ENCODE measurements at regions of chr4 and their contacts with region 1.

Region 1: DNA sequence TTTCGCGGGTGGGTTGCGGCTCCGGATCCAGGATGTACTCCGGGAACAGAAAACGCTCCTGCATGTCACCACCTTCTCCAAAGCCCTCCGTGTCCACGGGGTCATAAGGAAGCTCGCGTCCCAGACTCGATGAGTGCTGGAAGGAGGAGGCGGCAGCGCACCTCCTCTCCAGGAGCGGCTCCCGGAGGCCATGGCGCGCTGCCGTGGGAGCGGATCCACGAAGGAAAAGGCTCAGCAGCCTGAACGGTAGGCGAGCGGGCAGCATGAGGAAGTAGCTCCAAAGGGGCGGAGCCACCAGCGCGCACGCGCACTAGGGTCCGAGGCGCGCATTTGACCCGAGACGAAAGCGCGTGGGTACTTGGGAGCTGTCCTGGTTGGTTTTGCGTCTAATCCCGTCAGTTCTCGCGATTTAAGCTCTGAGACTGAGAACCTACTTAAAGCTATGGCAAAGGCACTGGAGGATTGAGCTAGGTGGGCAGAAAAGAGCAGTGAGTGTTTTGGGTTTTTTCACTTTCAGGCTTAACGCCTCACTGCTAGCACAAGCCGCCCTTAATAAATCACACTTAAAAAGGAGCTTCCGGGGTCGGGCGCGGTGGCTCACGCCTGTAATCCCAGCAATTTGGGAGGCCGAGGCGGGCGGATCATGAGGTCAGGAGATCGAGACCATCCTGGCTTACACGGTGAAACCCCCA is at the start of gene NOA1:
- DNase-seq: peak; percentile 81 to 98
- ATAC-seq: peak; percentile 87 to 88
- H3K4me3 ChIP-seq: peak within 1 kb of the TSS; percentile 87
- H3K27ac ChIP-seq: peak within 1 kb of the TSS; percentile 85 to 91
- H3K4me1 ChIP-seq: peaks cover 24% of the 10 kb centered on the region
- CTCF ChIP-seq: no peak
- EP300 ChIP-seq: no peak
- POLR2A ChIP-seq: peak; percentile 82
- RAD21 ChIP-seq: no peak
- polyA plus RNA-seq, gene NOA1: 13.8 and 15.0 TPM in 2 replicates

Region 2: DNA sequence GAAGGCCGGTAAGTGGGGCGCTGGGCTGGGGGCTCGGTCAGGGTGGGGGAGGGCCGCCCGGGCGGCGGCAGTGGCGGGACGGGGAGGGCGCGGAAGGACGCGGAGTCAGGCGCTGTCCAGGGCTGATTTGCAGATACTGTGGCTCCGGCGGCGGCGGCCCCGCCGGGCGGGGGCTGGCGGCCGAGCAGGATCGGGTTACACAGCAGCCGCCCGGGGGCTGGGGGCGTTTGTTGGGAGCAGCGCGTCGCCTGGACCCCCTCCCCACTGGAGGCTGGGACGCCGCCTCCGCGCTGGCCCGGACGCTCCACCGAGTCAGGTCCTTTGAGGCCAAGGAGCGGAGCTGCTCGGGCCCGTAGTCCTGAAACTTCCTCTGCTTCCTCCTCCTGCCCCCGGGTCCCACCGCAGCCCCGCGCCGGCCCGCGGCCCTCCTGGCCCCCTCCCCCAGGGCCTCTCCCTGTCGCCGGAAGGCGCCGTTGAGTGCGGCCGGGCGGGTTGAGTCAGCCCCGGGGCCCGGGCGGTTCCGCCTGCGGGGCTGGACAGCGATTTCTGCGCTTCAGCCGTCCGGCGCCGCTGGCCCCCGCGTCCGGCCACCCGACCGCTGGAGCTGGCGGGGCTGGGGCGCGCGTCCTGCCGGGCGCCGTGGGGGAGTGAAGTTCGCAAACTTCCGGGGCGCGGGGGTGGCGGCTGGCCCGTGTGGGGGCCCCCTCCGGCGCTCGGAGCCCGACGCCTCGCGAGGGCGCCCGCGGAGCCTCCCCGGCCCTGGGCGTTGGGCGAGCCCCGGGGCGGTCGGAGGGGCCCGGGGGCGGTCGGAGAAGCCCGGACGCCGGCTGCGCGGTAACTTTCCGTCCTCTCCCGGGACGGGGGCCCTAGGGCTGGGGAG is 69.0 kb before region 1 on chr4:
- CTCF ChIA-PET with region 1: interaction called, 3 read pairs
- POLR2A ChIA-PET with region 1: interaction called, 16 read pairs
- DNase-seq: peak; percentile 32 to 46
- ATAC-seq: peak; percentile 77 to 80
- H3K4me3 ChIP-seq: peak overlapping the region; percentile 96
- H3K27ac ChIP-seq: peak overlapping the region; percentile 92 to 99
- H3K4me1 ChIP-seq: peaks cover 15% of the 10 kb centered on the region
- CTCF ChIP-seq: 0 out of 3 replicates have a peak, but pooled peaks have one; percentile 9
- EP300 ChIP-seq: no peak
- POLR2A ChIP-seq: no peak
- RAD21 ChIP-seq: no peak

Measured in A549 (cell line).